Spleen (tissue), 13 donors: ENCODE measurements at regions of chr14 and their contacts with region 1.

Region 1: DNA sequence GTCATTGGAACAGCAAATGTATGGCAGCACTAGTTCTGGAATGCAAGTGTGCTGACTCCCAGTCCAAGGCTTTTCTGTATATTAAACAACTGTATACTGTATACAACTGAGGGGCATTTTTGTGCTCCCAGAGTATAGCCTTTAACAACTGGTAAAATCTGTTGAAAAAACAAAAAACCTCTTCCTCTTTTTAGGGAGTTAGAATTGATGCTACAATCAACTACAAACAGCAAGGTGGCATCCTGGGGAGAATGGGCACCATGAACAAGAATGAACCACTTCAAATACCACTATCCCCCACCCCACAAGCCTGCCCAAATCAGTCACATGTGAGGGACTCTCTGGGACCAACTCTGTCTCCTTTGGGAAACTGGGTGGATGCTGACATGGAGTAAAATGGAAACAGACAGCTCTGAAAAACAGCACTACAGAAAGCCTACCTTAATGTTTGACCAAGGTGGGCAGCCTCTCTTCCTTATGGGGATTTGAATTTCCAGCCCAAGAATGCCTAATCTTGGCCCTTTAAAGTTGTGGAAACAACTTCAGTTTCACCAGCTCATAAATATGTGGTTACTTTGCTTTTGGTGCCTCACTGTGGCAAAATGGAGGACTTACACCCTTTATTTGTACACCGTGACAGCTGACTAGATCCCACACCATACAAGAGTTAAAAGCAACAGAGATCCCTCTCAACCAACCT is 7.5 kb downstream of the VTI1B start:
- DNase-seq: no peak
- H3K4me3 ChIP-seq: no peak overlapping the region
- H3K27ac ChIP-seq: peak overlapping the region in 2 of 8 donors; percentile 26 to 50
- H3K4me1 ChIP-seq: peaks cover 4 to 93% (median 53%) of the 10 kb centered on the region in 6 donors
- H3K27me3 ChIP-seq: no peaks in the 10 kb centered on the region
- CTCF ChIP-seq: peak; percentile 26 to 72 (median 63)
- POLR2A ChIP-seq: no peak

Region 2: DNA sequence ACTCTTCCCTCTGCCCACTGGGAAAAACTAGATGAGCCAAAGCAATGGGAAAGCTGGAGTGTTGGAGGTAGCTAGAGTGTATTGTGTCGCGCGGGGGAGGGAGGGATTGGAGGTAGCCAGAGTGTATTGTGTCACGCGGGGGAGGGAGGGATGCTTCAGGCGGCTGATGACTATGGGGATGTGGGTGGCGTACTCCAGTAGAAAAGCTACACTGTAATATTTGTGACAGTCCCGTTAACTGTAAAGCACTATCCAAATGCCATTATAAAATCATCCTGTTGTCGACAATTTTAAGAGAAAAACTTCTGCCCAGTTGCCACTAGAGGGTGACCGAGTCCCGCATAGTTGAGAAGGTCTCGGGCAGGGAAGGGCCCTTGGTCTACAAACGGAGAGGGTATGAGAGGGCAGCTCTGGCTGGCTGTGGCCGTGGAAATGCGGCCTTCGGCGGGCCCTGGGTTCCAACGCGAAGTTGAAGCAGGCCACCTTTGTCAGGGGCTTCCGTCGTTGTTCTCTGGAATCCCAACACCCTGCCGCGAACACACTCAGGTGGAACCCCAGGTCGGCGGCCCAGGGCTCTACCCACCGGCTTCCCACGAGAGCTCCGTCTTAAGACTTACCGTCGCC is 239.8 kb before region 1 on chr14:
- intact Hi-C with region 1: loop called (anchors 5 kb)
- DNase-seq: peak; percentile 88
- H3K4me3 ChIP-seq: no peak overlapping the region
- H3K27ac ChIP-seq: no peak overlapping the region
- H3K4me1 ChIP-seq: peaks cover 0 to 9% (median 6%) of the 10 kb centered on the region in 6 donors
- H3K27me3 ChIP-seq: peaks cover 0 to 38% (median 2%) of the 10 kb centered on the region in 7 donors
- CTCF ChIP-seq: peak; percentile 35 to 83 (median 73)
- POLR2A ChIP-seq: no peak

Region 3: DNA sequence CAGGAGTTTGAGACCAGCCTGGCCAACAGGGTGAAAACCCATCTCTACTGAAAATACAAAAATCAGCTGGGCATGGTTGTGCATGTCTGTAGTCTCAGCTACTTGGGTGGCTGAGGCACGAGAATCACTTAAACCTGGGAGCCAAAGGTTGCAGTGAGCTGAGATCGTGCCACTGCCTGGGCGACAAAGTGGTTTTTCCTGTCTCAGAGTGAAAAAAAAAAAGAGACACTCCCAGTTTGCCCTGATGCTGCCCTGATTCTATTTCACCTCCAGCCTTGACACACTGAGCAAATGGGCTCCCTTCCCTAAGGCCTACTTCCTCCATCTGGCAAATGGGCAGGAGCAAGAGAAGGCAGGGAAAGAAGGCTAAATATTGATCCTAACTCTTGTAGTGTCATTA is 226.4 kb before region 1 on chr14:
- intact Hi-C with region 1: no loop called
- DNase-seq: no peak
- H3K4me3 ChIP-seq: no peak overlapping the region
- H3K27ac ChIP-seq: no peak overlapping the region
- H3K4me1 ChIP-seq: no peaks in the 10 kb centered on the region
- H3K27me3 ChIP-seq: peaks cover 0 to 8% (median 0%) of the 10 kb centered on the region in 7 donors
- CTCF ChIP-seq: no peak
- POLR2A ChIP-seq: no peak

Region 4: GRCh38 chr14:67487937-67488893 is 178.7 kb before region 1 on chr14 and contains the start of gene TMEM229B:
- intact Hi-C with region 1: no loop called
- DNase-seq: peak; percentile 94
- H3K4me3 ChIP-seq: peak within 1 kb of the TSS; percentile 22 to 72 (median 49)
- H3K27ac ChIP-seq: peak within 1 kb of the TSS; percentile 83 to 94 (median 92)
- H3K4me1 ChIP-seq: peaks cover 18 to 96% (median 69%) of the 10 kb centered on the region in 6 donors
- H3K27me3 ChIP-seq: no peaks in the 10 kb centered on the region
- CTCF ChIP-seq: no peak
- POLR2A ChIP-seq: no peak
- total RNA-seq, gene TMEM229B: 20.1 to 36.0 (median 29.0) TPM

Region 5: DNA sequence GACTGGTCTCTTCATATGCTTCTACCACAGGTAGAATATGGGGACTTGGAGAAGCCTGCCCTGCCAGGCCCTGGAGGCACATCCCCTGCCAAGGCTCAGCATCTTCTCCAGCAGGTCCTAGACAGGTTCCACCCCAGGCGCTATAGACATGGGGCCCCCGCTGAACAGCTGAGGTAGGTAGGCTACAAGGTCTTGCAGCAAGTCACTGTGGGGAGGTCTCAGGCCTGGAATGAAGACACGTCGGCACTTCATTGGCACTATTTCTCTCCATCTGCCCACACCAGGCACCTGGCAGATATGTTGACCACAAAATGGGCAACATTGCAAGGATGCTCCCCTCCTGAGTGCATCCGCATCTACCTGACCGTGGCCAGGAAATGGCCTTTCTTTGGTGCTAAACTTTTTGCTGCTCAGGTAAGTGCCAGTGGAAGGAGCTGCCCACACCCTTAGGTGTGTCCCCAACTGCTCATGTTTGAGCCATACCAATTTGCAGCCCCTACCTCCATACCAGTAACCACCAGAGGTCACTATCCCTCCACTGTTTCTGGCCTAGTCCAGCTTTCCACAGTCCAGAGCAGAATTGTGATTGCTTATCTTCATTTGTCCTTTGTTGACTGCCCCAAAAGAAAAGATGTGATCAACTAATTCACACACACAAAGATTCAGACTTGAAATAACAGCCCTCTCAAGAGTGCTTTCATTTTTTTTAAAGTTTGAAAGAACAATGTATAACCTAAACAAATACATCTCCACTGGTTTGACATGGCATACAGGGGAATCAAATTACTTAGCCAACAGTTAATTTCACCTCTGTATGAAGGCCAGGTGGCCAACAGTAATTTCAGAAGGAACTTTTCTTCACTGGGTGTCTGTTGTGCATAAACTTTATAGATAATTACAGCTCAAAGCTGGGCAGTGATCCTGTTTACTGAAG is 82.9 kb before region 1 on chr14:
- intact Hi-C with region 1: loop called (anchors 10 kb)
- DNase-seq: peak; percentile 55
- H3K4me3 ChIP-seq: no peak overlapping the region
- H3K27ac ChIP-seq: no peak overlapping the region
- H3K4me1 ChIP-seq: no peaks in the 10 kb centered on the region
- H3K27me3 ChIP-seq: no peaks in the 10 kb centered on the region
- CTCF ChIP-seq: peak; percentile 56 to 80 (median 70)
- POLR2A ChIP-seq: no peak

Region 6: GRCh38 chr14:67619446-67620216 is 47.3 kb before region 1 on chr14 and contains the start of gene ARG2:
- intact Hi-C with region 1: loop called (anchors 5 kb)
- DNase-seq: peak; percentile 100
- H3K4me3 ChIP-seq: peak within 1 kb of the TSS; percentile 46 to 80 (median 56)
- H3K27ac ChIP-seq: peak within 1 kb of the TSS in 7 of 8 donors; percentile 5 to 81 (median 67)
- H3K4me1 ChIP-seq: peaks cover 9 to 32% (median 20%) of the 10 kb centered on the region in 6 donors
- H3K27me3 ChIP-seq: peaks cover 0 to 6% (median 0%) of the 10 kb centered on the region in 7 donors
- CTCF ChIP-seq: peak in 5 of 11 experiments; percentile 12 to 38 (median 23)
- POLR2A ChIP-seq: no peak
- total RNA-seq, gene ARG2: 0.80 to 4.7 (median 1.8) TPM

Region 7: GRCh38 chr14:67766172-67766680 is 99.3 kb after region 1 on chr14:
- intact Hi-C with region 1: no loop called
- DNase-seq: no peak
- H3K4me3 ChIP-seq: no peak overlapping the region
- H3K27ac ChIP-seq: peak overlapping the region in 5 of 8 donors; percentile 9 to 68 (median 60)
- H3K4me1 ChIP-seq: peaks cover 0 to 28% (median 7%) of the 10 kb centered on the region in 6 donors
- H3K27me3 ChIP-seq: no peaks in the 10 kb centered on the region
- CTCF ChIP-seq: no peak
- POLR2A ChIP-seq: no peak

Region 8: GRCh38 chr14:67816326-67817002 is 149.6 kb after region 1 on chr14 and contains the start of gene ZFYVE26:
- intact Hi-C with region 1: no loop called
- DNase-seq: peak; percentile 95
- H3K4me3 ChIP-seq: peak within 1 kb of the TSS; percentile 71 to 95 (median 78)
- H3K27ac ChIP-seq: peak within 1 kb of the TSS; percentile 71 to 90 (median 86)
- H3K4me1 ChIP-seq: peaks cover 32 to 86% (median 62%) of the 10 kb centered on the region in 6 donors
- H3K27me3 ChIP-seq: no peaks in the 10 kb centered on the region
- CTCF ChIP-seq: no peak
- POLR2A ChIP-seq: no peak
- total RNA-seq, gene ZFYVE26: 33.0 to 43.5 (median 39.9) TPM